ENCODE measurements at regions of chr3 and their contacts with region 1.

Region 1: DNA sequence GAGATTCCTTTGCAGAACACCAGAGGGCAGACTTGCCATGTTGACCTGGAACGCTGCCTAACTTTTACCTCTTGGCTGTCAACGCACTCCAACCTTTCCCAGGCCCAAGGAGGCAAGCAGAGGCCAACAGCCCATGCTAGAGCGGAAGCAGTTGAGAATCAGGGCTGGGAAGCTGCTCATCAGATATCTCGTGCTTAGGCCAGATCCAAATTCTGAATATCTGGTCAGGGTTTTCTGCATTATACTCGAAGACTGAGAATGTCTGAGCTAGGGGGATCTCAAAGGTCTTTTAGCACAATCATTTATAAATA is 2.5 kb downstream of the XIRP1 start:
- DNase-seq: no peak

Region 2: DNA sequence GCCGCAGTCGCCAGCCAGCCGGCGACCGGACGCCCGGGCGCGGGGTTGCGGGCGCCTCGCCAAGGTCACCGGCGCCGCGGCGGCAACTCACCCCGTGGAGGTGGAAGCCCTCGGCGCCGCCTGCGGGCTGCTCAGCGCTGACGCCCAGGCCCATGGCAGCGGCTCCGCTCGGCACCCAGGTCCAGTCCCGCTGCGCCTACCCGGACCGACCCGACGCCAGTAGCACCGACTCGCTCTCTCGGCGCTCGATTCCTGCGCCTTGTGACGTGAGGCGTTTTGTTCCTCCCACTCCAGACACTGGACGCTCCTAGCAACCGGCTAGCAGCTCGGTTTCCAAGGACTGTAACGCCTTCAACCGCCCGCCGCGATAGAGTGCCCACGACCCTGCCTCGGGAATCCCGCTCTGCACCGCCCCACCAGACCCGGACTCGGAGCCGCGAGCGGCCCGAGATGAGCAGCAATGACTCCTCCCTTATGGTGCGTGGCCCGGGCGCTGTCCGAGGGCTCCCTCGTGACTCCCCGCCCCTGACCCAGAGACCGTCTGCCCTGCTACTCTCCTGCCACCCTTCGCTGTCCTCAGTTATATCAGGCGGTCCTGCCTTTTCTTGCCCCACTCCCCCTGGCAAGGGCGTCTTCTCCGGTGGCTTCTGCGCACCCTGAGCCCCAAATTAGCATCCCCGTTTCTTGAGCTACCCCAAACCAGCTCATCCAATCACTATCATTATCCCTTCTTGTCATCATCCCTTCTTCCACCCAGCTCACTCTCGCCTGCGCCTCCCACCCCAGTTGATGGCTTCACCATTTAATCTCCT is 82.3 kb before region 1 on chr3 and contains the starts of genes GORASP1 and TTC21A:
- intact Hi-C with region 1: loop called (anchors 5 kb)
- DNase-seq: peak; percentile 97
- total RNA-seq, gene GORASP1: 45.9 TPM
- total RNA-seq, gene TTC21A: 3.0 TPM

Region 3: DNA sequence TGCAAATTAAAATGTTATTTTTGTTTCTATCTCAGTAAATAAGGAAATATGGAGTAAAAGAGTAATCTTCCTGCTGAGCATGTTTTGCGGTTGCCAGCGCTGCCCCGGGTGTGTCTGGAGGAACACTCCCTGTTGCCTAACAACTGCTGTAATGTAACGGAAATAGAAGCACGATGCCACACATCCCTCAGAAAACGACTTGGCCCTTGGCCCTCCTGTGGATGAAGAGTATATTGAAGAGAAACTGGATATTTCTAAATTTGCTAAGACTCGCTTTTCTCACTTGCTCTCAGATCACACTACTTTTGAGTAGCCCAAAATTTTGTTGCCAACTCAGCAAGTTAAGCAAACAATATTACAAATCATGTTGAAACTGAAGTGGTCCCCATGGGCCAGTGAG is 71.0 kb after region 1 on chr3:
- intact Hi-C with region 1: loop called (anchors 5 kb)
- DNase-seq: peak; percentile 93

Measured in cardiac septum (tissue), 1 donor.